MCF 10A (cell line): ENCODE measurements at regions of chr10 and their contacts with region 1.

Region 1: DNA sequence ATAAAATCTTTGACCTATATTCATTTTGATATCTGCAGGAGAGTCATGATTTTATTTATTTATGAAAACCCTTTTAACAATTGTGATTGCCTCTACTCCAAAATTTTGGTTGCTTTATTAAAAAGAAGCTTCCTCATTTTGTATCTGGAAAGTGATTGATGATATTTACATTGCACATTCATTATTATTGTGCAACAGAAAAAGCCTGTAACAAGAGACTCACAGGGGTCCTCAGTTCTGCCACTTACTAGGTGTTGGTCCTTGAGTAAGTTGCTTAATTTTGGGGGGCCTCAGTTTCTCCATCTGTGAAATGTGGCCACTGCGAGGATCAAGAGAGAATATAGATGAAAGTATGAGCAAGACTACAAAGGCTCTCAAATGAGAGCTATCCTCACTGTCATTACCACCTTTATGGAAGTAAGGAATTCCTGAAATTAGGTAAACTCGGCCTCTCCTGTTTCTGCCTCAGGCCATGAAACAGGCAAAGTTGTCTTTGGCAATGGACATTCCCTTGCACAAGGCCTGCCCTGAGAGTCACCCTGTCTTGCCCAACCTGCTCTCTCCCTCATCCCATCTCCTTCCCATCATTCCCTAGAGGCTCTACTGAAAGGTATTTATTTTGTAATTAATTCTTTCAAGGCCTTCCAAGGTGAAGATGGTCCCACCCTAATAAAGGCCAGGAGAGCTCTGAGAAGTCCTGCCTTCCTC is 66.1 kb upstream of the ABLIM1 start:
- DNase-seq: peak; percentile 98
- H3K4me3 Mint-ChIP-seq: no peak overlapping the region
- H3K27ac Mint-ChIP-seq: peak overlapping the region; percentile 59
- H3K4me1 Mint-ChIP-seq: peaks cover 39% of the 10 kb centered on the region
- H3K27me3 Mint-ChIP-seq: no peaks in the 10 kb centered on the region
- CTCF ChIP-seq: no peak

Region 2: DNA sequence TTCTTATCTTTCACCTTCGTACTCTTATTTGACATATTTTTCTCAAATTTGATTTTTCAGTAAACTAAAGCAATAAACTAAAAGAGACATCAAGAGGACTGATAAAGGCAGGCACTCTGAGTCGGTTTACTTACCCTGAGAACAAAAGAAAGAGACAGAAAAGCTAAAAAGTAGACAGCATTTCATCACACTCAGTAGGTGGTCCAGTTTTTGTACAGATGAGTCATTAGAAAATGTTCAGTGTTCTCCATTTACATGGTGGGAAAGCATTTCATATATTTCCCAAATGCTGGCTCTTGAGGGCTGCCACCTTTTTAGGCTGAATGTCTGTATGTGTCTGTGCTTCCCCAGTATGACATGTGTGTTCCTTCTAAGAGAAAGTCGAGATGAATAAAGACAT is 817.0 kb before region 1 on chr10:
- CTCF ChIA-PET with region 1: no interaction called
- POLR2A ChIA-PET with region 1: no interaction called
- intact Hi-C with region 1: no loop called
- DNase-seq: peak; percentile 49
- H3K4me3 Mint-ChIP-seq: no peak overlapping the region
- H3K27ac Mint-ChIP-seq: no peak overlapping the region
- H3K4me1 Mint-ChIP-seq: no peaks in the 10 kb centered on the region
- H3K27me3 Mint-ChIP-seq: no peaks in the 10 kb centered on the region
- CTCF ChIP-seq: no peak

Region 3: DNA sequence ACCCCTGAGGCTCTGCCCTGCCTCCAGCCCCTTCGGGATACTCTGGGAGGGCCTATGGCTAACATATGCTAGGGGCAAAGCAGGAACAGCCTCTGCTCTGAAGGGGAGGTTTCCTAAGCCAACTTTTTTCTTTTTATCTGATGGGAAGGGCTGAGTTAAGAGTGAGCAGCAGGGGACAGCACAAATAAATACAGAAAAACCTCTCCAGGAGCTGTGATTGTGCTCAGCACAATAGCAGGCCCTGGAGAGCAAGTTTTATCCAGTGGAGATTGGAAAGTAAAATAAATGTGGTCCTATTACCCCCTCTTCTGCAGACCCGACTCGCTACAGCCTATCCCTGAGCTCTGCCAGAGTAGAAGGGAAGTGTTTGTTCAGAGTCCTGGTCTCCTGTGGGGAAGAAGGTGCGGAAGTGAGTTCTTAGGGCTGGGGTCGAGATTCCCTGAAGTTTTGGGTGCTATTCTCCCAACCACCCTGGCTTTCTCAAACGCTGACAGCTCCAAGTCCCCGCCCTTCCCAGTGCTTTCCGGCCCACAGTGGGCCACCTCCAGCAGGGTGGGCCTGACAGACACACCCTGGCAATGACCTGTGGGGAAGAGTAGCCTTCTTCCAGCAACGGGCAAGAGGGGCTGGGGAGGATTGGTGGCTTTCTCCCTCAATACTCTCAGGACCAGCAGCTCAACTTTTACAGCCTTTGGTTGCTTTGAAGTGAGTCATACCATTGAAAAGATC is 296.9 kb before region 1 on chr10:
- CTCF ChIA-PET with region 1: no interaction called
- POLR2A ChIA-PET with region 1: no interaction called
- intact Hi-C with region 1: no loop called
- DNase-seq: no peak
- H3K4me3 Mint-ChIP-seq: no peak overlapping the region
- H3K27ac Mint-ChIP-seq: no peak overlapping the region
- H3K4me1 Mint-ChIP-seq: no peaks in the 10 kb centered on the region
- H3K27me3 Mint-ChIP-seq: no peaks in the 10 kb centered on the region
- CTCF ChIP-seq: no peak

Region 4: DNA sequence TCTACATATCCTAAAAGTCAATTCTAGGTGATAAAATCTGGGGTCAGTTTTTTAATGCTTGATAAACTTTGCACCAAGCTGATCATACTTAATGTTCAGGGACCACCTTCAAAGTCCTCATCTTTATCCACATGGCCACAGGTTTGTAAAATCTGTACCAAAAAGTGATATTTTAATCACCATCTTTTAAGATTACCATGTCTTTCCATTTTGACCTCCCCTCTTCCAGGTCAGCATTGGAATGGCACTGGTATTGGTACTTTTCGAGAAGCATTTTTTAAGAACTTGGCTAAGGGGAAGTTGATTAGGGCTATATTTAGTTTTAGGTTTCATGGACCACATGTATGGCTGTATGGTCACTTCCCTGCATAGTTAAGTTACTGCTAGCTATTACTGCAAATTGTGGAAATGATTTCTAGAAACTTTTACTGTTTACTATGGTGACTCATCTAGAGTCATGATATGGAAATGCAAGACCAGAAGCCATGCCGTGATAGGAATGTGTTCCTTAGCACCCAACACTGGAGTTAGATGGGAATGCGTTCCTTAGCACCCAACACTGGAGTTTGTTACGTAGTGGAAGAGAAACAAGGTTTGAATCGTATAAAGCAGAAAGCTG is 15.3 kb before region 1 on chr10:
- CTCF ChIA-PET with region 1: interaction called, 9 read pairs
- POLR2A ChIA-PET with region 1: interaction called, 61 read pairs
- intact Hi-C with region 1: no loop called
- DNase-seq: peak; percentile 87
- H3K4me3 Mint-ChIP-seq: no peak overlapping the region
- H3K27ac Mint-ChIP-seq: peak overlapping the region; percentile 30
- H3K4me1 Mint-ChIP-seq: peaks cover 47% of the 10 kb centered on the region
- H3K27me3 Mint-ChIP-seq: no peaks in the 10 kb centered on the region
- CTCF ChIP-seq: no peak

Region 5: GRCh38 chr10:114767101-114767985 is 43.2 kb after region 1 on chr10:
- CTCF ChIA-PET with region 1: interaction called, 3 read pairs
- POLR2A ChIA-PET with region 1: interaction called, 15 read pairs
- intact Hi-C with region 1: no loop called
- DNase-seq: peak; percentile 52
- H3K4me3 Mint-ChIP-seq: peak overlapping the region; percentile 74
- H3K27ac Mint-ChIP-seq: no peak overlapping the region
- H3K4me1 Mint-ChIP-seq: peaks cover 9% of the 10 kb centered on the region
- H3K27me3 Mint-ChIP-seq: no peaks in the 10 kb centered on the region
- CTCF ChIP-seq: no peak

Region 6: DNA sequence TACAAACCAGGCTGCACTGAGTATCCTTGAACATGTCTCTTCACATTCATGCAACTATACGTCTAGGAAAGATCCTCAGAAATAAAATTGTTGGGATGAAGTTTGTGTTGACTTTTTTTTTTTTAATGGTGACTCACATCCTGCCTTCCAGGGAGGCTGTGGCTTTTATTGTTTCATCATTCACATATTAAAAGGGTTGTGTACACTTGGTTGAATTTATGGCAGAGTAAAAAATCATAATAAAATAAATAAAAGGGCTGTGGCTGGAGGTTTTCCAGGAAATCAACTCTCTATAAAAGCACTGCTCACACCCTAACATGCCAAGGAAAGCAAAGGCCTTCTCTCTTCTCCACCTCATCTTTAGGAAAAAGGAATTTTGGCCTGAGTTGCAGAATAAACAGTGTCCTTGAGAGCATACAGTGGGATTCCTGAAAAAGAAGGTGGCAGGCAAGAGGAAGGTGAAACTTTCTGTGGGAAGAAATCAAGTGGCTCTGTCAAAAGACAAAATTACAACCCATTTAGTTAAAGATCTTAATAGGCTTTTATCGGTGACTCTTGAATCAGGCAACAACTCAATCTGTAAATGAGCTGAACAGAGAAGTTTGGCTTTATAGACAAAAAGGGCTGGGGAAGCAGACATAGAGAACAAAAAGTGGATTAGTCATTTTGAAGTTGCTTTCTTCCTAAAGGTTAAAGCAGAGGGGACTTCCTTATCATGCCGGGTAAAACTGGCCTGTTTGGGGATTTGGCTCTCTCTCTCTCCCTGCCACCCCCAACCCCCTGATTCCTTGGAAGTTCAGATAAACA is 55.9 kb after region 1 on chr10:
- CTCF ChIA-PET with region 1: interaction called, 11 read pairs
- POLR2A ChIA-PET with region 1: interaction called, 6 read pairs
- intact Hi-C with region 1: no loop called
- DNase-seq: peak; percentile 94
- H3K4me3 Mint-ChIP-seq: no peak overlapping the region
- H3K27ac Mint-ChIP-seq: peak overlapping the region; percentile 74
- H3K4me1 Mint-ChIP-seq: peaks cover 27% of the 10 kb centered on the region
- H3K27me3 Mint-ChIP-seq: no peaks in the 10 kb centered on the region
- CTCF ChIP-seq: no peak

Region 7: DNA sequence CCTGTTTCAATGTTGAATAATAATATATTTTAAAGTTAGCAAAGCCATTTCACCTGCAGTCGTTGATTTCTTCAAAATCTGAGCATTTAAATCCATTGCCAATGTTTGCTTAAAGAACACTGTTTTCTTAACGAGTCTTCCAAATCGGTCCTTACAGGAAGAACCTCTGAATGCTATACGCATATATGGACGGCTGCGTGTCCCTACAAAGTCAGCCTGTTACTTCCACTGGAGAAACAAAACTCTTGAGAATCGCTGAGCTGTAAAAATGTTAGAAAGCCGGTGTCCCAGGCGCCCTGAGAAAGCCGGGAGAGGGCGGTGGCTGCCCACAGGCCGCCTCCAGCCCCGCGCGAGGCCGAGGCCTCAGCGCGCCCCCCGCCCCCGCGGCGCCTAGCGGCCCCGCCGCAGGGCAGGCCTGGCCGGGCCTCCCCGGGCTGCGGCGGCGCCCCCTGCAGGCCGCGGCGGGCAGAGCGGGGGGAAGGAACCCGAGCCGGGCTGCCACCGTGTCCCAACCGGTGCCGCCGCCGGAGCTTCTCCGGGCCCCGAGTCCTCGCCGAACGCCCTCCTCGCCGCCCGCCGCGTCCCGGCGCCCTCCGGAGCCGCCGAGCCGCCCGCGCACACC is 97.3 kb after region 1 on chr10 and contains the start of gene FHIP2A:
- CTCF ChIA-PET with region 1: no interaction called
- POLR2A ChIA-PET with region 1: interaction called, 17 read pairs
- intact Hi-C with region 1: no loop called
- DNase-seq: peak; percentile 71
- H3K4me3 Mint-ChIP-seq: peak within 1 kb of the TSS; percentile 85
- H3K27ac Mint-ChIP-seq: peak within 1 kb of the TSS; percentile 97
- H3K4me1 Mint-ChIP-seq: peaks cover 20% of the 10 kb centered on the region
- H3K27me3 Mint-ChIP-seq: no peaks in the 10 kb centered on the region
- CTCF ChIP-seq: peak; percentile 34
- total RNA-seq, gene FHIP2A: 17.2 and 25.9 TPM in 2 replicates